ENCODE measurements at regions of chr20 and their contacts with region 1.

Region 1: DNA sequence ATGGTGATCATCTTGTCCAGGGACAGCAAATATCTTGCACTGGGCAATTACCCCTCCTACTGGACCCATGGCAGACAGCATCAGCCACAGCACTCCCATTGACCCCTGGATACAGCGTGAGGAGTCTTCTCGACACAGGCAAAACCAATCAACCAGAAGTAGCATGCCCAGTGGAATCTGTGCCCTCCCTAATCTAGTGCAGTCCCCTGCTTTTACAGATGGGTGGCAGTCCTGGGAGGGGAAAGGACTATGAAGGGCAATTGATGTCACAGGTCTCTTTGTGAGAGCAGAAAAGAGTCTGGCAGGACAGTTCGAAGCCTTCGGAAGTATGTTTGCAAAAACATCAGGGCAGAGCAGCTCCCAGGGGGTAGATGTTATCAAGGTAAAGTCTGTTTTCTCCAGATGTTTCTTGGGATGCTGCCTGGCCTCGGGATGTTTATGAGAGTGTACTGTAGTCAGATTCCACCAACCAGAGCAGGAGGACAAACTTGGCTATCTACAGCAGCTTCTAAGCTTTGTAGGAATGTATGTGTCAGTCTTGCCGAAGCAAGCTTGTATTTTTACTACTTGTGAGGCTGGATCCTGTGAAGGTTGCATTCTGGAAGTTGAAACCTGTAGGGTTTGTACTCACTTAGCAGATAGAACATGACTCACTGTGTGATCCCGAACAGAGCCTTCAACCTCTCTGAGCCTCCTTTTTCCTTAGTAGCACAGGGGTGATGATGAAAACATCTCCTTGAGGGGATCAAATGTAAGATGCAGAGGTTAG is 63.0 kb upstream of the MYL9 start:
- DNase-seq: no peak
- H3K4me3 ChIP-seq: no peak overlapping the region
- H3K27ac ChIP-seq: no peak overlapping the region
- H3K4me1 ChIP-seq: peaks cover 12% of the 10 kb centered on the region
- H3K27me3 ChIP-seq: no peaks in the 10 kb centered on the region
- CTCF ChIP-seq: no peak
- POLR2A ChIP-seq: no peak

Region 2: GRCh38 chr20:36493013-36493800 is 14.9 kb after region 1 on chr20:
- CTCF ChIA-PET with region 1: interaction called, 11 read pairs
- POLR2A ChIA-PET with region 1: interaction called, 3 read pairs
- dilution Hi-C with region 1: no loop called
- intact Hi-C with region 1: no loop called
- DNase-seq: peak; percentile 34
- H3K4me3 ChIP-seq: no peak overlapping the region
- H3K27ac ChIP-seq: no peak overlapping the region
- H3K4me1 ChIP-seq: peaks cover 19% of the 10 kb centered on the region
- H3K27me3 ChIP-seq: no peaks in the 10 kb centered on the region
- CTCF ChIP-seq: peak; percentile 22 to 33
- POLR2A ChIP-seq: no peak

Region 3: DNA sequence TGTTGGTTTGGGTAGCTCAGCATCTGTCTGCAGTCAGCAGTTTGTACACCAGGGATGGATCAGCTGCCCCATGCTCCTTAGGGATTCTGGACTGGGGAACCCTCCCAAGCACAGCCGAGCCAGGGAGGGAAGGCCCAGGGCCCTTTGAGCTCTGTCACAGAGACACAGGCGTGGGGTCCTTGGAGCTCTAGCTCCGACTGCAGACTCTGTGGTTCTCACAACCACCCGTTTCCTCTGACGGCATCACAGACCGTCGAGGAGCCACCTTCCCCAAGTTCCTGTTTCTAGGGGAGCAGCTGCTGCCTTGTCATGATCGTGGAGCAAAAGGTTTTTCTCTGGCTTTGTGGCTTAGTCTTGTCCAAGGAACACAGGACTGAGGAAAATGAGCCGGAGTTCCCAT is 167.7 kb after region 1 on chr20 and contains the start of gene SLA2:
- CTCF ChIA-PET with region 1: no interaction called
- POLR2A ChIA-PET with region 1: no interaction called
- dilution Hi-C with region 1: no loop called
- intact Hi-C with region 1: no loop called
- DNase-seq: no peak
- H3K4me3 ChIP-seq: no peak within 1 kb of the TSS
- H3K27ac ChIP-seq: no peak within 1 kb of the TSS
- H3K4me1 ChIP-seq: no peaks in the 10 kb centered on the region
- H3K27me3 ChIP-seq: no peaks in the 10 kb centered on the region
- CTCF ChIP-seq: no peak
- POLR2A ChIP-seq: no peak
- total RNA-seq, gene SLA2: not detected in 2 replicates

Region 4: GRCh38 chr20:36969478-36970186 is 491.3 kb after region 1 on chr20:
- CTCF ChIA-PET with region 1: no interaction called
- POLR2A ChIA-PET with region 1: no interaction called
- dilution Hi-C with region 1: no loop called
- intact Hi-C with region 1: no loop called
- DNase-seq: no peak
- H3K4me3 ChIP-seq: no peak overlapping the region
- H3K27ac ChIP-seq: no peak overlapping the region
- H3K4me1 ChIP-seq: no peaks in the 10 kb centered on the region
- H3K27me3 ChIP-seq: no peaks in the 10 kb centered on the region
- CTCF ChIP-seq: no peak
- POLR2A ChIP-seq: no peak

Measured in endothelial cell of umbilical vein (primary cell).